ENCODE measurements at regions of chr9 and their contacts with region 1.

Region 1: GRCh38 chr9:128669786-128670185 is 13.1 kb upstream of the DYNC2I2 start:
- DNase-seq: no peak
- ATAC-seq: no peak
- H3K4me3 ChIP-seq: no peak overlapping the region
- H3K27ac ChIP-seq: no peak overlapping the region
- H3K4me1 ChIP-seq: peaks cover 6 to 10% of the 10 kb centered on the region in 2 experiments; a peak in 4 of 5 replicates
- H3K27me3 ChIP-seq: no peaks in the 10 kb centered on the region
- CTCF ChIP-seq: no peak
- EP300 ChIP-seq: no peak
- POLR2A ChIP-seq: no peak
- RAD21 ChIP-seq: no peak

Region 2: GRCh38 chr9:128168731-128169308 is 501.0 kb before region 1 on chr9:
- CTCF ChIA-PET with region 1: no interaction called
- POLR2A ChIA-PET with region 1: no interaction called
- in situ Hi-C with region 1: no loop called
- intact Hi-C with region 1: loop called (anchors 5 kb)
- DNase-seq: no peak
- ATAC-seq: no peak
- H3K4me3 ChIP-seq: no peak overlapping the region
- H3K27ac ChIP-seq: no peak overlapping the region
- H3K4me1 ChIP-seq: peaks cover 0 to 16% of the 10 kb centered on the region in 2 experiments; a peak in 3 of 5 replicates
- H3K27me3 ChIP-seq: no peaks in the 10 kb centered on the region
- CTCF ChIP-seq: no peak
- EP300 ChIP-seq: no peak
- POLR2A ChIP-seq: no peak
- RAD21 ChIP-seq: no peak

Region 3: DNA sequence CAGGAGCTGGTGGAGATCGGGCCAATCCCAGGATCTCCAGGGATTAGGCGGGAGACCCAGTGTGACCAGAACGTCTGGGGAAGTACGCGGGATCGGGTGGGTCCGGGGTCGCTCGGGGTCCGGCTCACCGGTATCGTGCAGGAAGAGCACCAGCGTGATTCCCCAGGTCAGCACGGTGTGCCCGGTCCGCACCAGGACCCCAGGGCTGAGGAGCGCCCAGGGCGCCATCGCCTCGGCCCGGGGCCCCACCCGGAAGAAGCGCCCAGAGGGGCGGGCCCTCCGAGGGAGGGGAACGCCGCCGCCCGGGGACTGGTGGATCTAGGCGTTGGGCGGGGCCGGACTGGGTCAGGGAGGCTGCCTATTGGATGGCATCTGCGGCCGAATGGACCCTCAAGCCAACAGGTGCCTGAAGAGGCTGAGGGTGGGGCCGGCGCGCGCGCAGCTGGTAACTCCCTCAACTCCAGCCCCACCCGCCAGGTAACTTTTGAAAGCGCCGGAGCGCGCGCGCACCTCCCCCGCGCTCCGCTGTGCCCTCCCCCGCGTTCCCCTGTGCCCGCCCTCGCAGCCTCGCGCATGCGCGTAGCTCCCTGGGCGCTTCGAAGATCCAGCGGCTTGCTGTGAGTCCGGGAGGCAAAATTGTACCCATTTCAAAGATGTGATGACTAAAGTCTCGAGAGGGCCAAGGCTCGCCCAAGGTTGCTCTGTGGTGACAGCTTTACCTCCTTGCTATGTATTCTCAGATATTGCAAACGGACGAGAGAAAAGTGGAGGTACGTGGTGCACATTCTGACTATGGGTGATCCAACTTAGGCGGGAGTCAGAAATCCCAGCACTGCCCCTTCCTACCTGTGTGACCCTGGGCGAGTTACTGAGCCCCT is 54.3 kb after region 1 on chr9 and contains the start of gene ZDHHC12:
- CTCF ChIA-PET with region 1: no interaction called
- POLR2A ChIA-PET with region 1: no interaction called
- in situ Hi-C with region 1: no loop called
- intact Hi-C with region 1: no loop called
- DNase-seq: peak; percentile 99 to 100 (median 99)
- ATAC-seq: peak; percentile 97
- H3K4me3 ChIP-seq: peak within 1 kb of the TSS; percentile 67
- H3K27ac ChIP-seq: peak within 1 kb of the TSS; percentile 72
- H3K4me1 ChIP-seq: peaks cover 8 to 55% of the 10 kb centered on the region in 2 experiments; a peak in 4 of 5 replicates
- H3K27me3 ChIP-seq: no peaks in the 10 kb centered on the region
- CTCF ChIP-seq: no peak
- EP300 ChIP-seq: no peak
- POLR2A ChIP-seq: peak; percentile 88
- RAD21 ChIP-seq: no peak
- polyA plus RNA-seq, gene ZDHHC12: 0.21 to 4.3 TPM

Region 4: GRCh38 chr9:128829477-128830251 is 159.9 kb after region 1 on chr9 and contains the start of gene SPOUT1:
- CTCF ChIA-PET with region 1: no interaction called
- POLR2A ChIA-PET with region 1: no interaction called
- in situ Hi-C with region 1: no loop called
- intact Hi-C with region 1: no loop called
- DNase-seq: peak; percentile 95 to 99 (median 98)
- ATAC-seq: peak; percentile 99
- H3K4me3 ChIP-seq: peak within 1 kb of the TSS; percentile 80
- H3K27ac ChIP-seq: peak within 1 kb of the TSS; percentile 73
- H3K4me1 ChIP-seq: peaks cover 5 to 33% of the 10 kb centered on the region in 2 experiments; a peak in 4 of 5 replicates
- H3K27me3 ChIP-seq: no peaks in the 10 kb centered on the region
- CTCF ChIP-seq: no peak
- EP300 ChIP-seq: no peak
- POLR2A ChIP-seq: peak; percentile 91
- RAD21 ChIP-seq: no peak
- polyA plus RNA-seq, gene SPOUT1: 10.6 to 13.2 TPM

Region 5: DNA sequence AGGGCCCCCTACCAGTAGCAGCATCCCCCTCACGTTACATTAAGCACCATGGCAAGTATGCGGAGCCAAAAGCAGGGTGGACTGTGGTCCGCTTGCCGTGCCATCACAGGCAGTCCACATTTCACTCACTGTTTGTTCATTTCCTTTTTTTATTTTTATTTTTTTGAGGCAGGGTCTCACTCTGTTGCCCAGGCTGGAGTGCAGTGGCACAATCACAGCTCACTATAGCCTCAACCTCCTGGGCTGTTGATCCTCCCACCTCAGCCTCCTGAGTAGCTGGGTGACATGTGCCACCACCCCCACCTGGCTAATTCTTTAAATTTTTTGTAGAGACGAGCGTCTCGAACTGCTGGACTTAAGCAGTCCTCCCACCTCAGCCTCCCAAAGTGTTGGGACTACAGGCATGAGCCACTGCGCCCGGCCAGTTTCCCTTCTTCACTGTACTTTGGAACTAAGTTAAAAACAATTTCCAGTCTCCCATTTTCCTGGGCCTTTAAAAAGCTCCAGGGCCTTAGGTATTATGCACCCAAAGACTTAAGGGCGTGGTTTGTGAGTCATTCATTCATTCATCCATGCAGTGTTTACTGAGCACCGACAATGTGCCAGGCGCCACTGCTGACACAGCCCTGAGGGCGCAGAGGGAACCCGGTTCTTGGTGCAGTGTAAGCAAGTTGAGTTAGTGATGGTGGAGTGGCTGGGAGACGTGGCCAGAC is 1015.6 kb after region 1 on chr9:
- CTCF ChIA-PET with region 1: no interaction called
- POLR2A ChIA-PET with region 1: no interaction called
- in situ Hi-C with region 1: no loop called
- intact Hi-C with region 1: loop called (anchors 5 kb)
- DNase-seq: no peak
- ATAC-seq: no peak
- H3K4me3 ChIP-seq: no peak overlapping the region
- H3K27ac ChIP-seq: no peak overlapping the region
- H3K4me1 ChIP-seq: peaks cover 0 to 30% of the 10 kb centered on the region in 2 experiments; a peak in 3 of 5 replicates
- H3K27me3 ChIP-seq: peaks cover 22 to 49% of the 10 kb centered on the region in 2 experiments; a peak in 4 of 5 replicates
- CTCF ChIP-seq: no peak
- EP300 ChIP-seq: no peak
- POLR2A ChIP-seq: no peak
- RAD21 ChIP-seq: no peak

Measured in K562 (cell line).